Left ventricle myocardium superior (tissue), 1 donor: ENCODE measurements at regions of chr5 and their contacts with region 1.

Region 1: DNA sequence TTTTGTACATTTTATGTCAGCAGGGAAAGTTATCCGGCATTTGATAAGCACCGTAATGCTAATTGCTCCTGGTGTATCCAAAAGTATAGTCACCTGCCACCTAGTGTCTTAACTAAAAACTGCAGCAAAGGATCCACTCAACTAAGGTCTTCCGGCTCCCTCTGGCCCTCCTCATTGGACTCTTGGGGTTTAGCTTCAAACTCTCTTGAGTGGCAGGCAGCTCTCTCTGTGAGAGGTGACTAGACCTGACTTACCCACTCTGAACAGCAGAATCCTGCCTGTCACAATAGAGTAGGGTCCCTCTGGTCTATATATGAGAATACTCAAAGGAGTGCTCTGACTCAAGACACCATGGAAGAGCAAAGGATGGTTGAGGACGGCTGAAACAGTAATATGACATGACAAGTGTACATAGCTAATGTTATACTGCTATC is 60.3 kb upstream of the CAST start:
- DNase-seq: no peak
- ATAC-seq: peak; percentile 85

Region 2: GRCh38 chr5:96381526-96381925 is 220.3 kb before region 1 on chr5:
- intact Hi-C with region 1: loop called (anchors 1 kb)
- DNase-seq: peak; percentile 29
- ATAC-seq: peak; percentile 51